ENCODE measurements at regions of chr17 and their contacts with region 1.

Region 1: DNA sequence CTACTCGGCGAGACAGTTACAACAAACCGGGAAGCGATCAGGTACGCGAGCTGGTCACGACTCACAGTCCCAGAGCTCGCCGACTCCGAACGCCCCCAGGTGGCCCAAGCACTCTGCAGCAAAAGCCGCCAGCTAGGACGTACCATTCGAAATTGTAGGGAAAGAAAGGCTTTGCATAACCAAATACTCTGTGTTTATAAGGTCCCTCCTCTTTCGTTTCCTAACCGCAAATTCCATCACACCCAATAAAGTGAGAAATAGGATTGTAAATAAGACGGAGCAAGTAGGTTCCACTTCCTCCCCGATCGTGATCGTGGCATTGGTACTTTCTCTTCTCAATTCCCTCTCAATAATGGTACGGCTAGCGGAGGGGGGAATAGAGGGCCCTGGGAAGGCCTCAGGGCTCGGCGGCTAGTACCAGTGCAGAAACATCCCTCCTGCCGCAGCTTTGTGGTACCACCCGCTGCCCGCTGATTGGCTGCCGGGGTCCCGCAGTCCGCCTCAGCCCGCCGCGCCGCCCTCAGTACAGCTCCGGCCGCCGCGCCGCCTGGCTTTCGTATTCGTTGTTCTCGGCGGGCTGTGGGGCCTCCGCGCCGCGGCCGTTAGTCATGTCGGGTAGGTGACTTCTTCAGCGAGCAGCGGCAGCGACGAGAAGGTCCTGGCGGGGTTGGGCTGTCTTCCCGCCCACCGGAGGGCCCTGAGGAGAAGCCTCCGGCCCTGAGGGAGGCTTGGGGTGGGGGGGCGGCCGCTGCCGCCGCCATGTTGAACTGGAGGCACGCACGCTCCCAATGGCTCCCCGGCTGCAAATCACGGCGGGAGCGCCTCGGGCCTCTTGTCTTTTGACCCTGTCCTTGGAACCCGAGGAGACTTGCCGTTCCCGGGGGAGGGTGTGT is at the start of gene TAF15:
- DNase-seq: peak; percentile 97
- H3K4me3 Mint-ChIP-seq: peak within 1 kb of the TSS; percentile 89
- H3K27ac Mint-ChIP-seq: peak within 1 kb of the TSS; percentile 98
- H3K4me1 Mint-ChIP-seq: peaks cover 61% of the 10 kb centered on the region
- H3K27me3 Mint-ChIP-seq: no peaks in the 10 kb centered on the region
- total RNA-seq, gene TAF15: 244 to 252 TPM

Region 2: DNA sequence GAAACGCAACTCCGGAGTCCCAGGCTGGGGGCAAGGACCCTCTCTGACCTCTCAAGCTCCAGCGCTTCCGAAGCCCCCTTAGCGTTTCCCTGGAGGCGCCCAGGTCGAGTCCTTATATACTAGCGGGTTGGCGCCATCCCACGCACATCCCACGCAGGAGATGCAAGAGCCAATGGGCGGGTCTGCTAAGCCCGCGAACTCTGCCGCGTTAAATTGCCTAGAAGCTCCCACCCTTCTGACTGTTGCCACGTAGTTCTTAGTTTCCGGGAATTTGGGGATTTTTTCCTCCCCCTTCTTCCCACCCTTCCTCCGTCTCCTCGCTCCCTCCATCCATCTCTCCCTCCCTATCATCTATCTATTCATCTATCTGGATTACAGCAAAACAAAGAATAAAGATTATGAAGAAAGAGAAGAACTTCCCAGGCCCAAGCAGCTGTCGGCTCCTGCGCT is 435.6 kb before region 1 on chr17 and contains the start of gene SLFN11:
- CTCF ChIA-PET with region 1: no interaction called
- POLR2A ChIA-PET with region 1: interaction called, 16 read pairs
- DNase-seq: peak; percentile 85
- H3K4me3 Mint-ChIP-seq: peak within 1 kb of the TSS; percentile 97
- H3K27ac Mint-ChIP-seq: peak within 1 kb of the TSS; percentile 96
- H3K4me1 Mint-ChIP-seq: peaks cover 56% of the 10 kb centered on the region
- H3K27me3 Mint-ChIP-seq: no peaks in the 10 kb centered on the region
- total RNA-seq, gene SLFN11: 67.5 to 72.6 TPM

Region 3: DNA sequence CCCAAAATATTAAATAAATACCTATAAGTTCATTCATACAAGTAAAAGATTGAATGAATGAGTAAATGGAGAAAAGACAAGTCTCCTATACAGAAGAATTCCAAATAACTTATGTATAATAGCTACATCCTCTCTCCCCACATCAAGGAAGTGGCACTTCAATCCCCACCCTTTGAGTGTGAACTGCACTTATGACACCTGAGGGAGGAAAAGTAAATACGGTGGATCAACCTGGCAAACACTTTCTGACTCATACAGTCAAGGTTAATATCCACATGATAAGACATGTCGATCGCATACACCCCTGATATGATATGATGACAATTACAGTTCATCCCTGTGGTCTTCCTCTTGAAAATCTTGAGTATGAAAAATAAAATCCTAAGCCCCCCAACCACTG is 289.8 kb before region 1 on chr17:
- CTCF ChIA-PET with region 1: no interaction called
- POLR2A ChIA-PET with region 1: no interaction called
- DNase-seq: no peak
- H3K4me3 Mint-ChIP-seq: peak overlapping the region; percentile 31
- H3K27ac Mint-ChIP-seq: peak overlapping the region; percentile 38
- H3K4me1 Mint-ChIP-seq: peaks cover 90% of the 10 kb centered on the region
- H3K27me3 Mint-ChIP-seq: no peaks in the 10 kb centered on the region

Region 4: DNA sequence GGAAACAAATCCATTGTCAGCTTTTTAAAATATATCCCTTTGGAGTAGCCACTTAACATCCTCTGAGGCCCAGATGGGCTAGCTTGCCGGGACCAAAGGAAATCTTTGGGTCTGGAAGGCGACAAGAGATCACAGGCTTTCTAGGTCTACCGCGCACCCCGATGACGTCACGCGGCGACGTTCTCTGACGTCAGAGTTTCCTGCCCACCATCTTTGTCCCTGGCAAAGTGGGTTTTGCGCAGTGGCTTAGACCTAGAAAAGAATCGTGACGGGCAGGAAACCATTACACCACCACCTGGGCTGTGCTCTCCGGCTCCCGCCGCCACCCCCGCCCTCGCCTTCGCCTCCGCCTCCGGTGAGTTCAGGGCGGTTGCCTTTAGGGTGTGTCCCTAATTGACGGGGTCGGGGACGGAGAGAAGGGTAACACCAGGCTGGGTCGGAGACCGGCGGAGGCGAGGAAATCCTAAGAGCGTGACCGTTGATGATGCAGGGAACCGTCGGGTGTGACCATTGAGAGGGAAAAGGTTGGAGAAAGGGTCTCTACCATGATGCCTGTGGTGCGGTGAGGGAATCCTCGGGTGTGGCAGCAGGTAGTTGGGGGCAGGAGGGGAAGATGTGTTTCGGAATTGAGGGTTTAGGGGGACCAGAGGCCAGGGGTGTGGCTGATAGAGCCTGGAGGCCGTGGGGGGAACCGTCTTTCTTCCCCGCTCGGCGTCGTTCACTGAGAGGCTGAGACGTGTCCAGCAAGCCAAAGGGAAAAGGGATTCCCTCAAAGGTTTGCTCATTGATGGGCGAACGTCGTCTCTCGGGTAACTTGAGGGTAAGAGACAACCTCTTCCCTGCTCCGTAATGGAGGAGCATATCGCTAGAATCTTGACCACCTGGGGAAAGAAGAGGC is 221.9 kb before region 1 on chr17 and contains the start of gene AP2B1:
- CTCF ChIA-PET with region 1: interaction called, 8 read pairs
- POLR2A ChIA-PET with region 1: interaction called, 32 read pairs
- DNase-seq: peak; percentile 98
- H3K4me3 Mint-ChIP-seq: peak within 1 kb of the TSS; percentile 96
- H3K27ac Mint-ChIP-seq: peak within 1 kb of the TSS; percentile 97
- H3K4me1 Mint-ChIP-seq: peaks cover 38% of the 10 kb centered on the region
- H3K27me3 Mint-ChIP-seq: peaks cover 11% of the 10 kb centered on the region
- total RNA-seq, gene AP2B1: 196 to 203 TPM

Region 5: DNA sequence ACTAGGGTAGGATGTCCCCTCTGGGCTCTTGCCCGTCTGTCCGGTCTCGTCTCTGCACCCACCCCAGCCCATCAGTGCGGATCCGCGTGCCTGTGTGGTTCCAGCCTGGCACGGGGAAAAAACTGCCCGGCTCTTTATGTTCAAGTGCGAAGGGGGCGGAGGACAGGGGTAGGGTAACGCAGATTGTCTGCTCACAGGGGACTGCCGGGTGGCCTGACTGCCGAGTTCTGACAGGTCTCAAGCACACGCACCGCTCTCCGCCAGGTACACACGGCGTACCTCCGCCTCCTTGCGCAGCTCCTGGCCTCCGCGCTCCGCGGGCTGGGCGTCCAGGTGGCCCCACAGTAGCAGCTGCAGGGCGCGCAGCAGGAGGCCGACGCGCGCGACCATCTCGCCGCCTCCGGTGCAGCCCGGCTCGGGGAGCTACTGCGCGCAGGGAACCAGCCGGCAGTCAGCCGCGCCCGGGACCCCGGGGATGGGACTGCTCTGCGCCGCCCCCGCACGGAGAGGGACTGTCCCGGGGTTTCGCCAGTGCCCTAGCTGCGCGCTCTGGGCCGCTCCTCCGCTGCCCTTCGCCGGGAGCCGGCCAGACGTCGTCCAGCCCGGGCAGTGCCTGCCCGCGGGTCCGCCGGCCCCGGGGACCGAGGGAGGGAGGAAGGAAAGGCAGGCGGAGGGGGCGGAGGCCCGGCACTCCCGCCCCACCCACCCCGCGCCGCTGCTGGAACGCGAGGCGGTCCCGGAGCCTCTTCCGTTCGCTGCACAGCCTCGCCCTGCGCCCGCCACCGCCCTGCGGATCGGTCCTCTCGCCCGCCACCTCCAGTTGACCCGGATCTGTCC is 14.0 kb before region 1 on chr17 and contains the start of gene MMP28:
- CTCF ChIA-PET with region 1: interaction called, 11 read pairs
- POLR2A ChIA-PET with region 1: interaction called, 52 read pairs
- DNase-seq: peak; percentile 48
- H3K4me3 Mint-ChIP-seq: peak within 1 kb of the TSS; percentile 69
- H3K27ac Mint-ChIP-seq: no peak within 1 kb of the TSS
- H3K4me1 Mint-ChIP-seq: peaks cover 15% of the 10 kb centered on the region
- H3K27me3 Mint-ChIP-seq: peaks cover 76% of the 10 kb centered on the region
- total RNA-seq, gene MMP28: not detected

Region 6: GRCh38 chr17:35879773-35880654 is 70.8 kb after region 1 on chr17 and contains the start of gene CCL5:
- CTCF ChIA-PET with region 1: interaction called, 4 read pairs
- POLR2A ChIA-PET with region 1: interaction called, 28 read pairs
- DNase-seq: peak; percentile 82
- H3K4me3 Mint-ChIP-seq: peak within 1 kb of the TSS; percentile 94
- H3K27ac Mint-ChIP-seq: peak within 1 kb of the TSS; percentile 95
- H3K4me1 Mint-ChIP-seq: peaks cover 58% of the 10 kb centered on the region
- H3K27me3 Mint-ChIP-seq: no peaks in the 10 kb centered on the region
- total RNA-seq, gene CCL5: 482 to 491 TPM

Measured in activated CD4-positive, alpha-beta memory T cell treated with anti-CD3 and anti-CD28 coated beads, Interleukin-2, amount 10 ng/mL, durations not matched to agents 7 days and 5 days (primary cell).